Caco-2 (cell line): ENCODE measurements at regions of chr2 and their contacts with region 1.

Region 1: DNA sequence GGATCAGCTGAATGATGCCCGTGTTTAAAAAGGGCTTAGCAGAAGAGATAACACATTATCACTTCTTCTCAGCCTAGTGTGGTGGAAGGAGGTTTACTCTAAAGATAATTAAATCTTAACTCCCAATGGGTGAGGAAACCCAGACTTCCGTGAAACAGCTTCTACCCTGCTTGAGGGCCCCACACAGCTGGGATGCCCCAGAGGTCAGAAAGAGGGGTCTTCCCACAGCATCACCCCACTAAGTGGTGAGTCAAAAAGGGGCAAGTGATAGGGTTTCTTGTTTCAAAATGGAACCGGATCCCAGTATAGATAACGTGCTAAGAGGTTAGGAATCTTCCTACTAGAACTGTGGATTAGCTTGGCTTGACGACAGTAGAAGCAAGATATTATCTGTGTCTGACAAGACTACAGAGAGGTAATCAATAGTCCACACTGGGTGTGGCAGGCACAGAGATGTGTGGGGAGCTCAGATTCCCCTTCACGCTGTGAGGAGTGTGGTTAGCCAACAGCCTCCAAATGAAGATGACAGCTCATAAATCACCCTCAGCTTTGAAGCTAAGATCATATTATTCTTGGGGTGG is 129.6 kb upstream of the COPS8 start:
- DNase-seq: peak; percentile 65 to 83
- H3K4me3 ChIP-seq: no peak overlapping the region
- H3K4me3 Mint-ChIP-seq: peak overlapping the region; percentile 53
- H3K27ac Mint-ChIP-seq: peak overlapping the region; percentile 91
- H3K4me1 ChIP-seq: peaks cover 28% of the 10 kb centered on the region
- H3K4me1 Mint-ChIP-seq: peaks cover 16% of the 10 kb centered on the region
- H3K27me3 ChIP-seq: no peaks in the 10 kb centered on the region
- H3K27me3 Mint-ChIP-seq: no peaks in the 10 kb centered on the region
- CTCF ChIP-seq: no peak

Region 2: DNA sequence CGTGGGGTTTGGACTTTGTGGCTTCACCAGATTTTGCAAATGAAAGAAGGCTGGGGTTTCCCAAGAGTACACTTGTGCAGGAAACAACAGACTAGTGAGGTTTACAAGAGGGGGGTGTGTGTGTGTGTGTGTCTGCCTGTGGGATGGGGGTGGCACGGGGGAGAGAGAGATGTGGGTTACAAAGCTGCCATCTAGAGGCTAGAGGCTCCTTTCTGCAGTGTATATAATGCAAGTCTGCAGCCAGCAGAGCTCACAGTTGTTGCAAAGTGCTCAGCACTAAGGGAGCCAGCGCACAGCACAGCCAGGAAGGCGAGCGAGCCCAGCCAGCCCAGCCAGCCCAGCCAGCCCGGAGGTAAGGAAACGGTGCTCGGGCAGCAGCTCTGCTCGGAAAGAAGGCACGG is 386.6 kb before region 1 on chr2 and contains the start of gene ACKR3:
- CTCF ChIA-PET with region 1: interaction called, 6 read pairs
- POLR2A ChIA-PET with region 1: no interaction called
- intact Hi-C with region 1: loop called (anchors 5 kb)
- DNase-seq: peak; percentile 66 to 67
- H3K4me3 ChIP-seq: peak within 1 kb of the TSS; percentile 40
- H3K4me3 Mint-ChIP-seq: peak within 1 kb of the TSS; percentile 75
- H3K27ac Mint-ChIP-seq: no peak within 1 kb of the TSS
- H3K4me1 ChIP-seq: peaks cover 20% of the 10 kb centered on the region; the same call in 1 of the 2 replicates
- H3K4me1 Mint-ChIP-seq: no peaks in the 10 kb centered on the region
- H3K27me3 ChIP-seq: no peaks in the 10 kb centered on the region
- H3K27me3 Mint-ChIP-seq: no peaks in the 10 kb centered on the region
- CTCF ChIP-seq: peak in 1 of 2 experiments; percentile 47
- total RNA-seq, gene ACKR3: 3.2 and 3.9 TPM in 2 replicates

Region 3: GRCh38 chr2:236691799-236692167 is 264.3 kb before region 1 on chr2:
- CTCF ChIA-PET with region 1: no interaction called
- POLR2A ChIA-PET with region 1: no interaction called
- intact Hi-C with region 1: loop called (anchors 5 kb)
- DNase-seq: peak in 1 of 2 experiments; percentile 47
- H3K4me3 ChIP-seq: no peak overlapping the region
- H3K4me3 Mint-ChIP-seq: no peak overlapping the region
- H3K27ac Mint-ChIP-seq: peak overlapping the region; percentile 48
- H3K4me1 ChIP-seq: peaks cover 18% of the 10 kb centered on the region
- H3K4me1 Mint-ChIP-seq: peaks cover 13% of the 10 kb centered on the region
- H3K27me3 ChIP-seq: no peaks in the 10 kb centered on the region
- H3K27me3 Mint-ChIP-seq: no peaks in the 10 kb centered on the region
- CTCF ChIP-seq: no peak

Region 4: DNA sequence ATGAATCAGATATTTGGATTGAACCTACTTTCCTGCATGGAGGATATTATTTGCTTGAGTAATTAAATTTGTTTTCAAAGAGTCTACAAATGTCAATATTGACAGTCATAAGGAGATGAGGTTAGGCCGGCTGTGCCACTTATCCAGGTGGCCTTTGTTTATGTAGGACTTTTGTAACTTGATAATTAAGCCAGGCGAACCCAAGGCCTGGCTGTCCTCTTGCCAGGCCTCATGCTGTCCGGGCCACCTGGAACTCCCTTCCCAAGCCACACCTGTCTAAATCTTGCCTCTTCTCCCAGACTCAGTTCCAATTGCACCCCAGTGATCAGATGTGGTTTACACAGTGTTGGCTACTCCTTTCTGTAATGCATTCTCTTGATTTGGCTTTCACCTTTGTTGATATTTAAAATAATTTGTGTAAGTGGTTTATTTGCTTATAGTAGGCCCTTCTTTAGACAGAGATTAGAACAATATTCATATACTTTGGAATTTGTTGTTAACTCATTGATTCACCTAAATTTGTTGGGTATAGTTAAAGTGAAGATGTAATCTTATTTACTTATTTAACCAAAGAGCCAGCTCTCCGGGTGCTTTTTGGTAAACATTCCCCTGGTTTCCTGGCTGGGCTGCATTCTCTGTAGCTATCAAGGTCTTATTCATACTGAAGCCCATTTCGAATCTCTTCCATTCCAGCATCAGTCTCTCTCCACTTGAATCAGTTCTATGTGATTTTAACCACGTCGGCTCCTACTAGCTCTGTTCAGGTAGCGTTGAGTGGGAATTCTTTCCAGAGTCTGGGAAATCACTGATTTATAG is 131.0 kb before region 1 on chr2:
- CTCF ChIA-PET with region 1: no interaction called
- POLR2A ChIA-PET with region 1: no interaction called
- intact Hi-C with region 1: loop called (anchors 10 kb)
- DNase-seq: peak; percentile 32 to 49
- H3K4me3 ChIP-seq: no peak overlapping the region
- H3K4me3 Mint-ChIP-seq: no peak overlapping the region
- H3K27ac Mint-ChIP-seq: no peak overlapping the region
- H3K4me1 ChIP-seq: peaks cover 23% of the 10 kb centered on the region
- H3K4me1 Mint-ChIP-seq: peaks cover 9% of the 10 kb centered on the region
- H3K27me3 ChIP-seq: no peaks in the 10 kb centered on the region
- H3K27me3 Mint-ChIP-seq: no peaks in the 10 kb centered on the region
- CTCF ChIP-seq: no peak

Region 5: GRCh38 chr2:236894791-236895190 is 61.3 kb before region 1 on chr2:
- CTCF ChIA-PET with region 1: no interaction called
- POLR2A ChIA-PET with region 1: no interaction called
- intact Hi-C with region 1: loop called (anchors 2 kb)
- DNase-seq: peak; percentile 46 to 49
- H3K4me3 ChIP-seq: no peak overlapping the region
- H3K4me3 Mint-ChIP-seq: peak overlapping the region; percentile 31
- H3K27ac Mint-ChIP-seq: peak overlapping the region; percentile 85
- H3K4me1 ChIP-seq: peaks cover 6% of the 10 kb centered on the region; the same call in 1 of the 2 replicates
- H3K4me1 Mint-ChIP-seq: peaks cover 15% of the 10 kb centered on the region
- H3K27me3 ChIP-seq: no peaks in the 10 kb centered on the region
- H3K27me3 Mint-ChIP-seq: no peaks in the 10 kb centered on the region
- CTCF ChIP-seq: no peak